ENCODE measurements at regions of chr10 and their contacts with region 1.

Region 1: DNA sequence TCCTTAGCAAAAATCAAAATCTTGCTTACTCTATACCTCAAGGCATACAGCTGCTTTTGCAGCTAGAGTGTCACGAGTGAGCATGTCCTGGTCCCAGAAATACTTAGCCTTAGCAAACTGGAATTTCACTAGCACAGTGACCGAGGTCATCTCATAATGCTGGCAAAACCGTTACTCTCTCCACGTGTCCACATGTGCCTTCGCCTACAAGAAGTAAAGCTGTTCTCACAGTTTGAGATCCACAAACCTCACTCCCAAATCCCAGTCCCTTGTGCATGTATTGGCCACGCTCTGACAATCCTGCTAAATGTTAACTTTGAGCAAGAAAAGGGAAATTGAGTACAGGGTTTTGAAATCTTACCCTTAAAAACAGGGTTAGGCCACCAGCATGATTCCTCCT is 111.0 kb upstream of the PLXDC2 start:
- DNase-seq: no peak
- ATAC-seq: peak in 5 of 8 donors; percentile 41 to 67 (median 57)
- H3K4me3 ChIP-seq: no peak overlapping the region
- H3K27ac ChIP-seq: no peak overlapping the region
- H3K4me1 ChIP-seq: no peaks in the 10 kb centered on the region
- H3K27me3 ChIP-seq: no peaks in the 10 kb centered on the region
- CTCF ChIP-seq: no peak

Region 2: GRCh38 chr10:18690541-18690940 is 1014.7 kb before region 1 on chr10:
- intact Hi-C with region 1: loop called in 1 of 10 experiments (anchors 5 kb)
- DNase-seq: no peak
- ATAC-seq: no peak
- H3K4me3 ChIP-seq: no peak overlapping the region
- H3K27ac ChIP-seq: no peak overlapping the region
- H3K4me1 ChIP-seq: no peaks in the 10 kb centered on the region
- H3K27me3 ChIP-seq: peaks cover 0 to 5% (median 0%) of the 10 kb centered on the region in 7 donors
- CTCF ChIP-seq: no peak

Region 3: DNA sequence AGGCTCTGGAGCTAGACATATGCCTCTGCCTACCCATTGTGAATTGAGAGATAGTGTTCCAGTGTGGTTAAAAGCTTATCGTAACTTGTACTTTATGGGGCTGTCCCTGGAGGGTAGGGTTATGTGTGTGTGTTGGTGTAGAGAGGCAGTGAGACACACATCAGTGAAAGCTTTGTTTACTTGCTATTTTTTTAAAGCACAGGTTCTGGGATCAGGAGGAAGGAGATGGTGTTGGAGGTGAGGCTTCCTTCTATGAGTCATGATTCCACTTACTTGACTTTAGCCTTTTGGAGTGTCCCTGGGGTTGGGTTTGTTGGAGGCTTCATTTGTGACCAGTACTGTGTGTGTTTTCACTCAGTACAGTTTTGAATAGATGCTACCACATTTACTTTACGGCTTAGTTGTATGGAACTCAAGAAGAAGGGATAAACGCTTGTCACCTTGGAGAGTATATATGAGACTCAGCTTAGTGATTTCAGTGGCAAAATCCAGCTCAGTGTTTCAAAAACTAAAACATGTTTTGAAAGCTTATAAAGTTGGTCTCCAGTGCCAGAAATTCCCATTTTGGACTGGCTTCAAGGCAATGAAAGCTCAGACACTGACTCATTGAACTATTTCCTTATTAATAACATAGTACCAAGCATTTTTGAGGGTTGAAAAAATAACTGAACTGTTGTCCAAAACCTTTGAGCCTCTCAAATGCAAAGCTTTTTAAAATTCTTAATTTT is 217.2 kb after region 1 on chr10:
- intact Hi-C with region 1: no loop called
- DNase-seq: peak in 1 of 2 donors; percentile 40
- ATAC-seq: peak; percentile 40 to 80 (median 67)
- H3K4me3 ChIP-seq: no peak overlapping the region
- H3K27ac ChIP-seq: peak overlapping the region; percentile 6 to 83 (median 63)
- H3K4me1 ChIP-seq: peaks cover 16 to 67% (median 38%) of the 10 kb centered on the region in 9 donors
- H3K27me3 ChIP-seq: no peaks in the 10 kb centered on the region
- CTCF ChIP-seq: no peak